Heart left ventricle (tissue), 16 donors: ENCODE measurements at regions of chr4 and their contacts with region 1.

Region 1: DNA sequence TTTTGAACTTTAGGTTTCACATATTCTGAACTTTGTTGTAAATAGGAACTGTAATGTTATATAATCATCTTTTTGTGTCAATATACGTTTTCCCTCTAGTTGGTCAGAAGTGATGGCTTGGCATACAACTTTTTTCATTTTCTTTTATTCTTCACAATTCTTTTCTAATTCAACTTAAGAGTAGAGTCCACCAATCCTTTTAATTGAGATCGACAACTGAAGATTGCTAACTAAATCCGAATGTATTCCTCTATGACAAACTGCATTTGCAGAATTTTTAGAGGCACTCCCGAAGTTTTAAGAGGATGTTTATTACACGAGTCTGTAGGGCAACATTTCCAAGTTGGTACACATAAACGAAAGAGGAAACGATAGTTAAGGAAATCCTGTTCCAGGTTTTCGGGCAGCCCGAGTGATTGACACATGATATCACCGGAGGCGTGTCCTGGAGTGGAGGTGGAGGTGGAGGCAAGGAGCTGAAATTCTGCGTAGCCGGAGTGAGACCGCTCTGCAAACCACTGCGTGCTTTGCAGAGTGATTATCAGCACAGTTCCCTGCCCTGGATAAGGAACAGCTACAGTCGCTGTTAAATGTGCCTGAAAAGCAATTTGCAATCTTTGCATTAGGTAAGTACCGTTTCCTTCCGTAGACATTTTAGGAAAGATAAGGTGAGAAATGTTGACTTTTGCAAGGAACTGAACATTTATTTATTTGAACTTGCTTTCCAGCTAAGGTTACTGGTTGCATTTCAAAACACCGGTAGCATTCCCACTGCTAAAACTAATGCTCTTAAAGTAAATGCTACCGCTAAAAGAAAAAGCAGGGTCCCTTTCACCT is at the start of gene SPRY1:
- DNase-seq: peak; percentile 84 to 93 (median 92)
- ATAC-seq: peak; percentile 86 to 92 (median 90)
- H3K4me3 ChIP-seq: peak within 1 kb of the TSS; percentile 63 to 86 (median 73)
- H3K27ac ChIP-seq: peak within 1 kb of the TSS; percentile 85 to 97 (median 93)
- H3K4me1 ChIP-seq: peaks cover 0 to 29% (median 0%) of the 10 kb centered on the region in 12 donors
- H3K27me3 ChIP-seq: peaks cover 0 to 8% (median 0%) of the 10 kb centered on the region in 9 donors
- CTCF ChIP-seq: no peak
- POLR2A ChIP-seq: peak; percentile 41 to 96
- total RNA-seq, gene SPRY1: 28.0 to 104 (median 39.1) TPM

Region 2: DNA sequence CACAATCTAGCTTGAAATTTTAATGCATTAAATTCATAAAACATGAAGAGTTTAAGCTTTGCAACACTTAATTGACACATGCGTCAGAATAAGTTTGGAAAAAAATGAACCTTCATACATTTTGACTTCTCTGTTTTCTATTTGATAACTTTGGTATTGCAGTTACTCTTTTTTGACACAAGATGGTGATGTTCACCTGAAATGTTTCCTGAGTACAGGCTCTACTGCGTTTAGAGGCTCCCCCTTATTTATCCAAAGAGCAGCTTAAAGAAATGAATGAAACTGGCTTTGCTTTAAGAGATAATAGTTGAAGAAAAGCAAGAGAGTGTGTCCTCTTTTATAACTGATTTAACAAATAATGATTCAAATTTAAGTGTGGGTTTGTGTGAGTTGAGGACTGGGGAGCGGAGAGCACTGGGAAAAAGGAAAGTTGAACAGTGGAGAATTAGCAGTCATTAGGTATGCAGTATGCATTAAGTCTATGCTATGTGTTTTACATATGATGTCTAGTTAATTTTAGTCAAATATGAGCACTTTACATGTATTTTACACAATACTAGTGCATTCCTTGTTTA is 293.5 kb before region 1 on chr4:
- intact Hi-C with region 1: loop called in 2 of 10 experiments (anchors 5 to 10 kb)
- DNase-seq: no peak
- ATAC-seq: peak in 3 of 4 donors; percentile 57 to 85 (median 66)
- H3K4me3 ChIP-seq: no peak overlapping the region
- H3K27ac ChIP-seq: no peak overlapping the region
- H3K4me1 ChIP-seq: peaks cover 0 to 20% (median 0%) of the 10 kb centered on the region in 12 donors
- H3K27me3 ChIP-seq: no peaks in the 10 kb centered on the region
- CTCF ChIP-seq: peak; percentile 55 to 85 (median 74)
- POLR2A ChIP-seq: no peak

Region 3: DNA sequence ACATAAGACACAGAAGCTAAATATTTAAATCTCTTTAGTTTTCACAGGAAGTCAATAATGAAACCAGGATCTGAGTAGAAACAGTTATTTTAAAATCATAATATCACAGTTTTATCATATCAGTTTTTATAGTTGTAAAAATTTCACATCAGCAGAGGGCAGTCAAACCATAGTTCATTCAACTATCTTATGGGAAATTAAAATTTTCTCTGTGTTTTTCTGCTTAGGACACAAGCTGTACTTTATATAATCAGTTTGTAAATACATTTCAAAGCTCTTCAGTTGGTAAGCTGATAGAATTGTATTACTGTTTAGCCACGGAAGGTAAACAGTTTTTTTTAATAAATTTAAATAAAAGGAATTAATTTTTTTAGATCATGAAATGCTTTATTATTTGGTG is 269.3 kb before region 1 on chr4:
- intact Hi-C with region 1: loop called in 6 of 10 experiments (anchors 5 to 10 kb)
- DNase-seq: no peak
- ATAC-seq: peak in 2 of 4 donors; percentile 49 to 63
- H3K4me3 ChIP-seq: no peak overlapping the region
- H3K27ac ChIP-seq: peak overlapping the region in 2 of 12 donors; percentile 25 to 48
- H3K4me1 ChIP-seq: peaks cover 0 to 12% (median 5%) of the 10 kb centered on the region in 12 donors
- H3K27me3 ChIP-seq: no peaks in the 10 kb centered on the region
- CTCF ChIP-seq: peak in 10 of 12 donors; percentile 24 to 70 (median 52)
- POLR2A ChIP-seq: no peak

Region 4: GRCh38 chr4:123325241-123325681 is 71.3 kb before region 1 on chr4:
- intact Hi-C with region 1: no loop called
- DNase-seq: no peak
- ATAC-seq: no peak
- H3K4me3 ChIP-seq: no peak overlapping the region
- H3K27ac ChIP-seq: no peak overlapping the region
- H3K4me1 ChIP-seq: peaks cover 0 to 6% (median 0%) of the 10 kb centered on the region in 12 donors
- H3K27me3 ChIP-seq: no peaks in the 10 kb centered on the region
- CTCF ChIP-seq: no peak
- POLR2A ChIP-seq: no peak

Region 5: DNA sequence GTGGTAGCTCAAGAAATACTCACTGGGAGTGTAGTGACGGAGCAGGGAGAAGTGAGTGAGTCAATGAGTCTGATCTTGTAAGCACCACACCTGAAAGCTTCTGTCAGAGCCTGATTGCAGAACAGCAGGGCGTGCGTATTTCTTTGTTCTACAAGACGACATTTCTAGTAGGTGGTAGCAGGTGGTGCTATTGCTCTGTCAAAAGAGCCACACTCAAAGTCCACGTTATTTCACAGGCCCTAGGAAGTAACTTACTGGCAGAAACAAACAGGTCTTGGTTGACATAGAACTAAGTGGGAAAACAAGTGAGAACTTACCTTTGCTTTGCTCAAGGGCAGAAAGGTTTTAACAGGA is 46.4 kb before region 1 on chr4:
- intact Hi-C with region 1: loop called in 1 of 10 experiments (anchors 5 kb)
- DNase-seq: no peak
- ATAC-seq: peak in 1 of 4 donors; percentile 25
- H3K4me3 ChIP-seq: no peak overlapping the region
- H3K27ac ChIP-seq: no peak overlapping the region
- H3K4me1 ChIP-seq: peaks cover 0 to 30% (median 16%) of the 10 kb centered on the region in 12 donors
- H3K27me3 ChIP-seq: no peaks in the 10 kb centered on the region
- CTCF ChIP-seq: peak in 1 of 12 donors; percentile 27
- POLR2A ChIP-seq: no peak

Region 6: DNA sequence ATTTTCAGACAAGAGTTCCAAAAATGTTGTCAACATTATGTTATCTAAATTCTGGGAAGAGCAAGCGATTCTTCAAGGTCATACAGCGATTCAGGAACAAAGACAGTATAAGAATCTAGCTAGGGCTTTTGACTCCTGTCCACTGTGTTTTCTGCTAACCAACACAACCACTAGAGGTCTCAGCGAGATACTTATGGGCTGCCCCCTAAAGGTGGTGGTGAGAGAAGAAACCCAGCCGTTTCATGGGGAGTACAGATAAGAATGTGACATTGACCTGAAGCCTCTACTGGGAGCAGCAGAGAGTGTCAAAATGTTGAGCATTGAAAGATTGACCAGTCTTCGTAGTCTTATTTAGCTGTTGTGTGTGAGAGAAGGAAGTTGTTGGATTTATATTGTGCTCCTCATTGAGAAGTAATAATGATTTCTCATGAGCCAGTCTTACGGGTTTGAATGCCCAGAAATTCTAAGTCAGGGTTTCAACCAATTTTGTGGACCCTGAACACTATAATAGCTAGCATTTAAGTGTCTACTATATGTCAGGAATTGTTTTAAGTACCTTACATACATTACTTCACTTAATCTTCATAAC is 168.3 kb after region 1 on chr4:
- intact Hi-C with region 1: loop called in 3 of 10 experiments (anchors 5 to 10 kb)
- DNase-seq: peak in 3 of 5 donors; percentile 34 to 60 (median 46)
- ATAC-seq: peak; percentile 86 to 95 (median 92)
- H3K4me3 ChIP-seq: no peak overlapping the region
- H3K27ac ChIP-seq: no peak overlapping the region
- H3K4me1 ChIP-seq: peaks cover 0 to 14% (median 5%) of the 10 kb centered on the region in 12 donors
- H3K27me3 ChIP-seq: no peaks in the 10 kb centered on the region
- CTCF ChIP-seq: peak; percentile 63 to 87 (median 76)
- POLR2A ChIP-seq: no peak

Region 7: DNA sequence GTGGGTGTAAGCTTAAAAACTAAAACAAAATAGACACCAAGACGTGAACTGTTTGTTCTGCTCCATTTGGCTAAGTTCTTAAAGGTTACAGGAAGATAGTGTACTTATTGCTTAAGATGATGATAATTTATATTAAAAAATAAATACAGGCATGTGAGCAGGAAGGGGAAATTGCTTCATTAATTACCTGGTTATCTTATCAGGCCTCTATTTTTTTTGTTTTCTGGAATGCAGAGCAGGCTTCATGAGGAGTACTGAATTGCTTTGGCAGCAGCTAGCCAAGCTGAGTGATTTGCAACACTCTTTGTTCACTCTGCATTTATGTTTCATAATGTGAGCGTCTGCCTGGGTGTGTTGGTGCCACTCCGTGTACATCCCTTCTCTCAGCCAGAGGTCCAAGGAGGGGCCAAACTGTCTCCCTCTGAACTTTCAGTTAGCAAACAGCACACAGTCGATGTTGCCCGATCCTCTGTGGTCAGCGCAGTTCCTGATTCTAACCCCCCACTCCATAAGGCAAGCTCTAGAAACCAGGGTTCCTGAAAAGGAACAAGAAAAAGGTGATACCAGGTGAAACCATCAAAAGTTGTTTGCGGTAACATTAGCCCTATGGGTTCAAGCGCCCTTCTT is 348.3 kb after region 1 on chr4:
- intact Hi-C with region 1: loop called in 3 of 10 experiments (anchors 5 to 10 kb)
- DNase-seq: peak in 3 of 5 donors; percentile 20 to 42 (median 30)
- ATAC-seq: peak; percentile 47 to 87 (median 61)
- H3K4me3 ChIP-seq: no peak overlapping the region
- H3K27ac ChIP-seq: peak overlapping the region; percentile 4 to 66 (median 47)
- H3K4me1 ChIP-seq: peaks cover 0 to 53% (median 17%) of the 10 kb centered on the region in 12 donors
- H3K27me3 ChIP-seq: no peaks in the 10 kb centered on the region
- CTCF ChIP-seq: no peak
- POLR2A ChIP-seq: no peak

Region 8: GRCh38 chr4:124030160-124030561 is 633.6 kb after region 1 on chr4:
- intact Hi-C with region 1: loop called in 1 of 10 experiments (anchors 10 kb)
- DNase-seq: peak in 4 of 5 donors; percentile 47 to 71 (median 51)
- ATAC-seq: peak; percentile 89 to 95 (median 94)
- H3K4me3 ChIP-seq: no peak overlapping the region
- H3K27ac ChIP-seq: peak overlapping the region; percentile 4 to 72 (median 28)
- H3K4me1 ChIP-seq: peaks cover 0 to 35% (median 12%) of the 10 kb centered on the region in 12 donors
- H3K27me3 ChIP-seq: no peaks in the 10 kb centered on the region
- CTCF ChIP-seq: no peak
- POLR2A ChIP-seq: no peak